BJ (cell line): ENCODE measurements at regions of chr17 and their contacts with region 1.

Region 1: DNA sequence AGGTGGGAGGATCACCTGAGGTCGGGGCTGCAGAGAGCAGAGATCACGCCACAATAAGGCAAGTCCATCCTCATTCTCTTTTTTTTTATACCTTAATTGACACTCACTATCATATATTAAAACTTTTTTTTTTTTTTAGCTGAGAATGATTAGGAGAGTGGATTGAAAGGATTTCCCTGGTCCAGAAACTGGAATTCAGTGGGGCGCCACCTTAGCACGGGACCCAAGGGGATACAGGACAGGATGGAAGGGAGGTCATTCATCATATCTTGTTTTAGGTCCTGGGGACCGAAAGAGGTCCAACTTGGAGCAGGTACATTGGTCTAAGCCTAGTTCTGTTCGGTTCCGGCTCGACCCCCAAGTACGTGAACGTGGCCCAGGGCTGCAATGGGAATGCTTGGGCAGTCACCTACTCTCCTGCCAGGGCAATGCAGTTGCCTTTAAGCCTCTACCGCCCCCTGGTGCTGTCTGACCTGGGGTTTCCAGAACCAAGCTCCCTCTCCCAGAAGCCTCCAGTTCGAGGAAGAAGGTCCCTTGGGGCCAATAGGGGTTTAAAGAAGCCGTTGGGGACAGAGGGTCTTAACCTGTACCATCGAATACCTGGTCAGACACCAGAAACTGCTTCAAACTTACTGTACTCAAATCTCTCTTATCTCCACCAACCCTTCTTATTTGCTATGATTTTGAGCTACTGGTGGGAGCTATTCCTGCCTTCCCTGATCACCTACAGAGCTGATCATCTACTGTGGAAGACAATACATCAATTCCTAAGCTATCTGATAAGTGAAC is 19.9 kb upstream of the GPATCH8 start:
- DNase-seq: no peak
- H3K4me3 ChIP-seq: no peak overlapping the region
- H3K27me3 ChIP-seq: no peaks in the 10 kb centered on the region
- CTCF ChIP-seq: peak; percentile 80

Region 2: GRCh38 chr17:44210342-44211192 is 312.5 kb before region 1 on chr17:
- CTCF ChIA-PET with region 1: interaction called, 15 read pairs
- POLR2A ChIA-PET with region 1: no interaction called
- DNase-seq: no peak
- H3K4me3 ChIP-seq: no peak overlapping the region
- H3K27me3 ChIP-seq: no peaks in the 10 kb centered on the region
- CTCF ChIP-seq: peak; percentile 83

Region 3: GRCh38 chr17:44344939-44345453 is 178.1 kb before region 1 on chr17 and contains the start of gene GRN:
- CTCF ChIA-PET with region 1: interaction called, 12 read pairs
- POLR2A ChIA-PET with region 1: no interaction called
- DNase-seq: peak; percentile 96
- H3K4me3 ChIP-seq: peak within 1 kb of the TSS; percentile 87
- H3K27me3 ChIP-seq: no peaks in the 10 kb centered on the region
- CTCF ChIP-seq: no peak
- polyA plus RNA-seq, gene GRN: 213 and 581 TPM in 2 replicates

Region 4: GRCh38 chr17:44363613-44364159 is 159.4 kb before region 1 on chr17 and contains the start of gene FAM171A2:
- CTCF ChIA-PET with region 1: interaction called, 18 read pairs
- POLR2A ChIA-PET with region 1: no interaction called
- DNase-seq: no peak
- H3K4me3 ChIP-seq: peak within 1 kb of the TSS; percentile 74
- H3K27me3 ChIP-seq: peaks cover 5% of the 10 kb centered on the region
- CTCF ChIP-seq: peak; percentile 22; the same call in 1 of the 2 replicates
- polyA plus RNA-seq, gene FAM171A2: 1.3 and 2.3 TPM in 2 replicates

Region 5: GRCh38 chr17:44400226-44400847 is 122.7 kb before region 1 on chr17:
- CTCF ChIA-PET with region 1: interaction called, 59 read pairs
- POLR2A ChIA-PET with region 1: no interaction called
- DNase-seq: no peak
- H3K4me3 ChIP-seq: no peak overlapping the region
- H3K27me3 ChIP-seq: no peaks in the 10 kb centered on the region
- CTCF ChIP-seq: peak; percentile 59

Region 6: DNA sequence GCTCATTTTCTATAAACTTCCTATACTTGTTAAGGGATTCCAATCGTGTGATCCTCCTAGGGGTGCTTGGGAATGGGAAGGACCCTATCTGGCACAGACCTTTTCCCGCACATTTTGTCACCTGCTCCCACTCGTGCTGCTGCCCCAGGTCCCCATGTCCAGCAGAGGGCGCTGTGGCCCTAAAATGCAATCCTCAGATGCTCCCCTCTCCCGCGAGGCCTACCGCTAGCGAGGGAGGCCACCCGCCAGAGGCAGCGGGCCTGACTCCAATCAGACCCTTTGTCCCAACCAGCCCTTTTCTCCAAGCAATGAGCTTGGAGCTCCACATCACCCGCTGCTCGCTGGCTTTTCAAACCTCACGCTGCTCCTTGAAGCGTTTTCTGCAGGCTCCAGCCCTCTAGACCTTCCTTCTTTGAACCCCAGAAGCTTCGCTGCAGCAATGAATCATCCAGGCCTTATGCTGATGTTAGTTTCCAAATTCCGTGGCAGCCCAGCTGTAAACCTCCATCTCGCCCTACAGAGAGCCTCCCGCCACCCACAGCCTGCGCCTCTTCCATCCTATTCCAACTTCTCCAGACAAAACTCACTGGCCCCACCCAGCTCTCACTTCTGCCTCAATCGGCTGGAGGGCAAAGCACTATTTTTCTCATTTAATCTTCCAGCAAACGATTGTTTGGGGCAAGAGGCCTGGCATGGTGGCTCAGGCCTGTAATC is 10.6 kb after region 1 on chr17:
- CTCF ChIA-PET with region 1: interaction called, 46 read pairs
- POLR2A ChIA-PET with region 1: no interaction called
- DNase-seq: no peak
- H3K4me3 ChIP-seq: peak overlapping the region; percentile 6; the same call in 1 of the 2 replicates
- H3K27me3 ChIP-seq: no peaks in the 10 kb centered on the region
- CTCF ChIP-seq: peak; percentile 96

Region 7: GRCh38 chr17:44645341-44645740 is 122.3 kb after region 1 on chr17:
- CTCF ChIA-PET with region 1: interaction called, 16 read pairs
- POLR2A ChIA-PET with region 1: no interaction called
- DNase-seq: no peak
- H3K4me3 ChIP-seq: no peak overlapping the region
- H3K27me3 ChIP-seq: no peaks in the 10 kb centered on the region
- CTCF ChIP-seq: no peak